ENCODE measurements at regions of chr2 and their contacts with region 1.

Region 1: GRCh38 chr2:48600204-48600813 is 17.3 kb upstream of the GTF2A1L start:
- DNase-seq: peak in 1 of 2 experiments; percentile 66
- H3K4me3 ChIP-seq: no peak overlapping the region
- H3K4me3 Mint-ChIP-seq: no peak overlapping the region
- H3K27ac Mint-ChIP-seq: no peak overlapping the region
- H3K4me1 ChIP-seq: no peaks in the 10 kb centered on the region
- H3K4me1 Mint-ChIP-seq: no peaks in the 10 kb centered on the region
- H3K27me3 ChIP-seq: no peaks in the 10 kb centered on the region
- H3K27me3 Mint-ChIP-seq: no peaks in the 10 kb centered on the region
- CTCF ChIP-seq: peak; percentile 81 to 83

Region 2: DNA sequence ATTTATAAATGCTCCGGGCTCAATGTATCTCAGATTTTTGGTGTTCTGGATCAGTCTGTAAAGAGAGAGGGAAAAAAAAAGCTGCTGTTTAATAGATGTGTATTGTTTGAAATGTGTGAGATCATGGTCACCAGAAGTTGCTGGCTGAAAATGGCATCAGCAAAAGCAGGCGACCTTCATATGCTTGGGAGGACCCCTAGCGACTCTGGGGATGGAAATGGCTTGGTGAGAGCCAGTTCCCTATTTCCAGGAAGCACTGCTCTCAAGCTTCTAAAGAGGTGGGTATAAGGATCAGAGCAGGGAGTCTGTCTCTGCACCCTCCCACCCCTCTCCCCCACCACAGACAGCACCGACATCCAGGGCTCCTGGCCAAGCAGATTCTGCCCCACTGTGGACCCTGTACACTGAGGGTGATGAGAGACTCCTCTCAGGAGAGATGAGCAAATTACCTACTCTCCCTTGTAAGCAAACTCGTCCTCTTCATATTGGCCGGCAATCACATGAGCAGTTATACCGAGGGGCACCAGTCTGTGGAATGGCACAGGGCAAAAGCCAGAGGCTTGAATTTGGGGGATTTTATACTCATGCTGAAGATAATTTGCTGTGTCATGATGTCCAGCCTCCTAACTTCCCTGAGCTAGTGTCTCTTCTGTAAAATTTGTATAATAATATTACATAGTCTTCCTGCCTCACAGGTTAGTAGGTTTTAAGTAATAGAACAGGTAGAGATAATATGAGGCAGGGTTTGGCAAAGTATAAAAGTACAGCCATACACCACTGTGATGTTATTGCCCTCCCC is 125.6 kb after region 1 on chr2:
- CTCF ChIA-PET with region 1: interaction called, 9 read pairs
- POLR2A ChIA-PET with region 1: no interaction called
- intact Hi-C with region 1: loop called (anchors 1 kb)
- DNase-seq: peak; percentile 25 to 41
- H3K4me3 ChIP-seq: no peak overlapping the region
- H3K4me3 Mint-ChIP-seq: no peak overlapping the region
- H3K27ac Mint-ChIP-seq: no peak overlapping the region
- H3K4me1 ChIP-seq: no peaks in the 10 kb centered on the region
- H3K4me1 Mint-ChIP-seq: no peaks in the 10 kb centered on the region
- H3K27me3 ChIP-seq: no peaks in the 10 kb centered on the region
- H3K27me3 Mint-ChIP-seq: peaks cover 3% of the 10 kb centered on the region
- CTCF ChIP-seq: peak in 1 of 2 experiments; percentile 53

Region 3: DNA sequence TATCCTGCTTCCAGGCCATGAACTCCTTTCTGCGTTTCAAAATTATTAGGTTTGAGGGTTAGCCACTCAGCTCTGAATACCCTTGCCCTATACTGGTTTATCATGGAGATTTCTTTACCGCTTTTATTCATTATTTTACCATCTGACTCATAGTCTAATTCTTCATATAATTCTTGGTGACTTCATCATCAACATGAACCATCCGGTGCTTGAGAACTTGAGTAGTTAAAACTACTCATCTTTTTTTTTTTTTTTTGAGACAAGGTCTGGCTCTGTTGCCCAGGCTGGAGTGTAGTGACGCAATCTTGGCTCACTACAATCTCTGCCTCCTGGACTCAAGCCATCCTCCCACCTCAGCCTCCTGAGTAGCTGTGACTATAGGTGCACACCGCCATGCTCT is 249.5 kb after region 1 on chr2:
- CTCF ChIA-PET with region 1: no interaction called
- POLR2A ChIA-PET with region 1: no interaction called
- intact Hi-C with region 1: loop called (anchors 10 kb)
- DNase-seq: no peak
- H3K4me3 ChIP-seq: no peak overlapping the region
- H3K4me3 Mint-ChIP-seq: no peak overlapping the region
- H3K27ac Mint-ChIP-seq: no peak overlapping the region
- H3K4me1 ChIP-seq: no peaks in the 10 kb centered on the region
- H3K4me1 Mint-ChIP-seq: no peaks in the 10 kb centered on the region
- H3K27me3 ChIP-seq: no peaks in the 10 kb centered on the region
- H3K27me3 Mint-ChIP-seq: peaks cover 6% of the 10 kb centered on the region
- CTCF ChIP-seq: no peak

Region 4: GRCh38 chr2:48912110-48912509 is 311.8 kb after region 1 on chr2:
- CTCF ChIA-PET with region 1: no interaction called
- POLR2A ChIA-PET with region 1: no interaction called
- intact Hi-C with region 1: loop called (anchors 10 kb)
- DNase-seq: peak in 1 of 2 experiments; percentile 35
- H3K4me3 ChIP-seq: no peak overlapping the region
- H3K4me3 Mint-ChIP-seq: no peak overlapping the region
- H3K27ac Mint-ChIP-seq: no peak overlapping the region
- H3K4me1 ChIP-seq: no peaks in the 10 kb centered on the region
- H3K4me1 Mint-ChIP-seq: no peaks in the 10 kb centered on the region
- H3K27me3 ChIP-seq: no peaks in the 10 kb centered on the region
- H3K27me3 Mint-ChIP-seq: peaks cover 12% of the 10 kb centered on the region
- CTCF ChIP-seq: peak in 1 of 2 experiments; percentile 37

Region 5: GRCh38 chr2:49490710-49491109 is 890.4 kb after region 1 on chr2:
- CTCF ChIA-PET with region 1: no interaction called
- POLR2A ChIA-PET with region 1: no interaction called
- intact Hi-C with region 1: loop called (anchors 10 kb)
- DNase-seq: peak; percentile 61 to 64
- H3K4me3 ChIP-seq: no peak overlapping the region
- H3K4me3 Mint-ChIP-seq: no peak overlapping the region
- H3K27ac Mint-ChIP-seq: no peak overlapping the region
- H3K4me1 ChIP-seq: no peaks in the 10 kb centered on the region
- H3K4me1 Mint-ChIP-seq: no peaks in the 10 kb centered on the region
- H3K27me3 ChIP-seq: no peaks in the 10 kb centered on the region
- H3K27me3 Mint-ChIP-seq: no peaks in the 10 kb centered on the region
- CTCF ChIP-seq: peak; percentile 62 to 69

Region 6: DNA sequence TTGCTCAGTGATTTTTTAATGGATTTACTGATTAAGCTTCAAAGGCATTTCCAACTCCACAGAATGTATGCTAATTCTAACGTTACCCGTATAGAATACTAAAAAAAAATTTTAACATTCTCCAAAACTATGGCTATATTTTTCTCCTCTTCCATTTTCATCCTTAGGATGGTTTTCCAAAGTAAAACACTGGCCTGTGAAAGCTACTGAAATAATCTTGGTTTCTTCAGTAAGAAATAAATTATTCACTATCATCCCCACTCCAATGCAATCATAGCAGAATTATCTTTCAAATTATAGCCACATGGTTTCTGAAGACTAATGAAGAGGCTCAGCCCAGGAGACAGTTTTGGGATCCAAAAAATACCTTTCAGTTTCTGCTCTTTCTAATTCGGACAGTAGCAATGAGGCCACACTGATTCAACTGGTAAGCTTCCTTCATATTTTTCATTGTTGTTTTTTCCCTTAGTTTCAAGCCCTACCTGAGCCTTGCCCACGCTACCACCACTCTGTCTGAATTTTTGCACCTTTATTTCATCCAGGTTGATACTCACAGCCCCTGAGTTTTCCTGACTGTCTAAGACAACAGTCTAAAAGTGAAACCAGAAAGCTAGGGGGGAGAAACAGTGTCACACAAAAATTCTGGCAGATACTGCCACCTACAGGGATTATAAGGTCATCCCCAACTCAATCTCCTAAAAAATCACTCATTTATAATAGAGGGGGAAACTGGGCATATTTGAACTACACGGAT is 1543.7 kb after region 1 on chr2:
- CTCF ChIA-PET with region 1: no interaction called
- POLR2A ChIA-PET with region 1: no interaction called
- intact Hi-C with region 1: loop called (anchors 5 kb)
- DNase-seq: peak in 1 of 2 experiments; percentile 37
- H3K4me3 ChIP-seq: peak overlapping the region; percentile 5; the same call in 1 of the 2 replicates
- H3K4me3 Mint-ChIP-seq: peak overlapping the region; percentile 47
- H3K27ac Mint-ChIP-seq: no peak overlapping the region
- H3K4me1 ChIP-seq: no peaks in the 10 kb centered on the region
- H3K4me1 Mint-ChIP-seq: no peaks in the 10 kb centered on the region
- H3K27me3 ChIP-seq: no peaks in the 10 kb centered on the region
- H3K27me3 Mint-ChIP-seq: peaks cover 3% of the 10 kb centered on the region
- CTCF ChIP-seq: peak; percentile 60 to 66

Region 7: GRCh38 chr2:50492477-50492851 is 1892.2 kb after region 1 on chr2:
- CTCF ChIA-PET with region 1: no interaction called
- POLR2A ChIA-PET with region 1: no interaction called
- intact Hi-C with region 1: loop called (anchors 5 kb)
- DNase-seq: peak; percentile 35 to 61
- H3K4me3 ChIP-seq: no peak overlapping the region
- H3K4me3 Mint-ChIP-seq: no peak overlapping the region
- H3K27ac Mint-ChIP-seq: no peak overlapping the region
- H3K4me1 ChIP-seq: no peaks in the 10 kb centered on the region
- H3K4me1 Mint-ChIP-seq: no peaks in the 10 kb centered on the region
- H3K27me3 ChIP-seq: no peaks in the 10 kb centered on the region
- H3K27me3 Mint-ChIP-seq: peaks cover 12% of the 10 kb centered on the region
- CTCF ChIP-seq: peak; percentile 59 to 69

Measured in Caco-2 (cell line).